SK-N-SH (cell line): ENCODE measurements at regions of chr5 and their contacts with region 1.

Region 1: DNA sequence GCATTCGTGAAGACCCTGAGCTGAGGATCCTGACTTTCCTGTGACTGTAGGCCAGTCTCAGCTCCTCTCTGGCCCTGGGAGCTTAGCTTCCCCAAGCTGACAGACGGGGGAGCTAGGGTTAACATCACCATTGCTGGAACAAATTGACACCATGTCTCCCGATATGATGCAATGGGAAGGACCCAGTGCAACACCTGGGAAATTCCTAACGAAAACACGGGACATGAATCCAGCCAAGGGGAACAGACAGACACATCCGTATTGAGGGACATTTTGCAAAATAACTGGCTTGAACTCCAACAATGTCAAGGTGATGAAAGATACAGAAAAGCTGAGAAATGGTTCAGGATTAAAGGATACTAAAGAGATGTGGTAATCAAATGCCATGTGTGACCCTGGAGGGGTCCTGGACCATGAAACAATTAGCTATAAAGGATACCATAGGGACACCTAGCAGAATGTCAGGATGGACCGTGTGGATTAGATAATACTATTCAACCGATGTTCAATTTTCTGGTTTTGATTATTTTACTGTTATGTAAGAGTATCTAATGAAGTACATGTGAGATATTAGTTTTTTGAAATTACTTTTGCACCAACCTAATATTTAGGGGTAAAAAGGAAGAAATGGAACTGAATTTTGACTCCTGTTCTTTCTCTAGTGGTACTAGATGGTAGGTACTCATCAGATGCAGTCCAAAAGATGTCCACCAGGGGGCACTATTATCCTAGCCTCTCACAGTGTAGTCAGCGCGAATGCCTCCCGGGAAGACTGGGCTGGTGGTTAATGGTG is 52.7 kb downstream of the NDST1 start:
- DNase-seq: peak; percentile 82
- H3K4me3 ChIP-seq: no peak overlapping the region; a peak in 1 of 4 replicates
- H3K27ac ChIP-seq: no peak overlapping the region
- H3K4me1 ChIP-seq: peaks cover 6 to 13% of the 10 kb centered on the region in 2 experiments; a peak in 2 of 4 replicates
- H3K27me3 ChIP-seq: no peaks in the 10 kb centered on the region
- CTCF ChIP-seq: peak; percentile 87
- EP300 ChIP-seq: no peak
- RAD21 ChIP-seq: peak; percentile 98

Region 2: GRCh38 chr5:150544611-150545219 is 15.9 kb before region 1 on chr5:
- CTCF ChIA-PET with region 1: interaction called, 24 read pairs
- POLR2A ChIA-PET with region 1: no interaction called
- DNase-seq: peak; percentile 90
- H3K4me3 ChIP-seq: no peak overlapping the region
- H3K27ac ChIP-seq: peak overlapping the region in 1 of 2 experiments; percentile 70; a peak in 2 of 4 replicates
- H3K4me1 ChIP-seq: peaks cover 4 to 30% of the 10 kb centered on the region in 2 experiments; a peak in 3 of 4 replicates
- H3K27me3 ChIP-seq: no peaks in the 10 kb centered on the region
- CTCF ChIP-seq: peak; percentile 63
- EP300 ChIP-seq: no peak
- RAD21 ChIP-seq: peak; percentile 64

Region 3: DNA sequence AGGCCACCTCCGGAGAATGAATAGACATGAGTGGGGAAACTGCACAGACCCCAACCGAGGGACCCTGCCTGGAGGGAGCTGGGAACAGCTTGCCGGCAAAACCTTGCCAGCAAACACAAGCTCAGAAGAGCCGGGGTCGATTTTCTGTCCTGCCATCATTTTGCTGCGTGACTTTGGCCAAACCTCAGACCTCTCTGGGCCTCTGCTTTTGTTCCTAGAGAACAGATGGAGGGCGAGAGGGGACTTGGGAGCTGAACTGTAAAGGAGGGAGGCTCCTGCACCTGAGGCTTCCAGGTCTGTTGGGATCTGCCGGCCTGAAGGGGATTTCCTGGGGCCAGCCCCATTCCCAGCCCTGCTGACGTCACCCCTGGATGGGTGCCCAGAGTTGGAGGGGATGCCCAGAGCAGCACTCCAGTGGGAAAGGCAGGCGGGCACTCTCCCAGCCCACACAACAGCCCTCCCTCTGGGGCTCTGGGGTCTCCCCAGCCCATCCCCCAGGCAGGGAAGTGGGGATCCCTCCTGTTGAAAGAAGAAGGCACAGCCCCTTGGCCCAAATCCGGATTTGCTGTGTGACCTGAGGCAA is 39.4 kb after region 1 on chr5:
- CTCF ChIA-PET with region 1: interaction called, 41 read pairs
- POLR2A ChIA-PET with region 1: interaction called, 9 read pairs
- DNase-seq: peak; percentile 86
- H3K4me3 ChIP-seq: peak overlapping the region; percentile 38; a peak in 3 of 4 replicates
- H3K27ac ChIP-seq: peak overlapping the region; percentile 85 to 99
- H3K4me1 ChIP-seq: peaks cover 37 to 85% of the 10 kb centered on the region in 2 experiments
- H3K27me3 ChIP-seq: no peaks in the 10 kb centered on the region
- CTCF ChIP-seq: no peak
- EP300 ChIP-seq: peak in 1 of 2 experiments; percentile 21; a peak in 1 of 4 replicates
- RAD21 ChIP-seq: no peak

Region 4: GRCh38 chr5:150656191-150657132 is 95.9 kb after region 1 on chr5:
- CTCF ChIA-PET with region 1: interaction called, 160 read pairs
- POLR2A ChIA-PET with region 1: interaction called, 6 read pairs
- DNase-seq: peak; percentile 100
- H3K4me3 ChIP-seq: peak overlapping the region; percentile 44 to 52
- H3K27ac ChIP-seq: peak overlapping the region in 1 of 2 experiments; percentile 82; a peak in 2 of 4 replicates
- H3K4me1 ChIP-seq: peaks cover 9 to 55% of the 10 kb centered on the region in 2 experiments
- H3K27me3 ChIP-seq: no peaks in the 10 kb centered on the region
- CTCF ChIP-seq: peak; percentile 49
- EP300 ChIP-seq: no peak
- RAD21 ChIP-seq: peak; percentile 79

Region 5: GRCh38 chr5:150689120-150689519 is 128.5 kb after region 1 on chr5:
- CTCF ChIA-PET with region 1: no interaction called
- POLR2A ChIA-PET with region 1: no interaction called
- DNase-seq: no peak
- H3K4me3 ChIP-seq: no peak overlapping the region
- H3K27ac ChIP-seq: no peak overlapping the region
- H3K4me1 ChIP-seq: no peaks in the 10 kb centered on the region
- H3K27me3 ChIP-seq: no peaks in the 10 kb centered on the region
- CTCF ChIP-seq: no peak
- EP300 ChIP-seq: no peak
- RAD21 ChIP-seq: no peak

Region 6: GRCh38 chr5:150710165-150710564 is 149.6 kb after region 1 on chr5:
- CTCF ChIA-PET with region 1: interaction called, 19 read pairs
- POLR2A ChIA-PET with region 1: interaction called, 3 read pairs
- DNase-seq: peak; percentile 25
- H3K4me3 ChIP-seq: no peak overlapping the region
- H3K27ac ChIP-seq: no peak overlapping the region
- H3K4me1 ChIP-seq: no peaks in the 10 kb centered on the region
- H3K27me3 ChIP-seq: no peaks in the 10 kb centered on the region
- CTCF ChIP-seq: peak; percentile 52
- EP300 ChIP-seq: no peak
- RAD21 ChIP-seq: peak; percentile 50